ENCODE measurements at regions of chr2 and their contacts with region 1.

Region 1: GRCh38 chr2:208254871-208255556 is at the start of gene IDH1:
- DNase-seq: peak; percentile 48
- H3K4me3 ChIP-seq: peak within 1 kb of the TSS; percentile 67
- H3K27me3 ChIP-seq: no peaks in the 10 kb centered on the region
- CTCF ChIP-seq: peak; percentile 70
- polyA plus RNA-seq, gene IDH1: 41.9 and 63.2 TPM in 2 replicates

Region 2: GRCh38 chr2:208175069-208175839 is 79.8 kb before region 1 on chr2:
- CTCF ChIA-PET with region 1: interaction called, 21 read pairs
- POLR2A ChIA-PET with region 1: no interaction called
- DNase-seq: peak; percentile 9
- H3K4me3 ChIP-seq: no peak overlapping the region
- H3K27me3 ChIP-seq: no peaks in the 10 kb centered on the region
- CTCF ChIP-seq: peak; percentile 95

Region 3: GRCh38 chr2:208265801-208266552 is 11.0 kb after region 1 on chr2 and contains the start of gene PIKFYVE:
- CTCF ChIA-PET with region 1: interaction called, 15 read pairs
- POLR2A ChIA-PET with region 1: interaction called, 4 read pairs
- DNase-seq: peak; percentile 92
- H3K4me3 ChIP-seq: peak within 1 kb of the TSS; percentile 84
- H3K27me3 ChIP-seq: no peaks in the 10 kb centered on the region
- CTCF ChIP-seq: no peak
- polyA plus RNA-seq, gene PIKFYVE: 11.5 and 17.6 TPM in 2 replicates